Caco-2 (cell line): ENCODE measurements at regions of chr10 and their contacts with region 1.

Region 1: DNA sequence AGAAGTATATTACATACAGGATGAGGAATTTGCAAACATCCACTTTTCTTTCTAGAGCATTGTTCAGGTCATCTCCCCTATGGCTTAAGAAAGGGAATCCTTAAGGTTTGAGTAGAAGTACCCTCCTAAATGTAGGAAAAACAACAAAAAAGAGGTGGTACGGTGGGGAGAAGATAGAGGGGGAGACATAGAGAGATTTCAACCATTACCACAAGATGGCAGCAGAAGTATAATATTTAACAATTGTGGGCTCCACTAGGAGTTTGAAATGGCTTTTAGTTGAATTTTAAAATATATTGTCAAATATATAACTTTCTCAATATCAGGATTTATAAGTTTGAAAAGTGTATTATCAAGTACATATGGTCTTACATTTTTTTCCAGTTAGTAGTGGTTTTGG is 72.7 kb upstream of the PRKG1 start:
- DNase-seq: peak in 1 of 2 experiments; percentile 37
- H3K4me3 ChIP-seq: no peak overlapping the region
- H3K4me3 Mint-ChIP-seq: no peak overlapping the region
- H3K27ac Mint-ChIP-seq: no peak overlapping the region
- H3K4me1 ChIP-seq: no peaks in the 10 kb centered on the region
- H3K4me1 Mint-ChIP-seq: no peaks in the 10 kb centered on the region
- H3K27me3 ChIP-seq: no peaks in the 10 kb centered on the region
- H3K27me3 Mint-ChIP-seq: peaks cover 17% of the 10 kb centered on the region
- CTCF ChIP-seq: peak; percentile 79 to 80

Region 2: DNA sequence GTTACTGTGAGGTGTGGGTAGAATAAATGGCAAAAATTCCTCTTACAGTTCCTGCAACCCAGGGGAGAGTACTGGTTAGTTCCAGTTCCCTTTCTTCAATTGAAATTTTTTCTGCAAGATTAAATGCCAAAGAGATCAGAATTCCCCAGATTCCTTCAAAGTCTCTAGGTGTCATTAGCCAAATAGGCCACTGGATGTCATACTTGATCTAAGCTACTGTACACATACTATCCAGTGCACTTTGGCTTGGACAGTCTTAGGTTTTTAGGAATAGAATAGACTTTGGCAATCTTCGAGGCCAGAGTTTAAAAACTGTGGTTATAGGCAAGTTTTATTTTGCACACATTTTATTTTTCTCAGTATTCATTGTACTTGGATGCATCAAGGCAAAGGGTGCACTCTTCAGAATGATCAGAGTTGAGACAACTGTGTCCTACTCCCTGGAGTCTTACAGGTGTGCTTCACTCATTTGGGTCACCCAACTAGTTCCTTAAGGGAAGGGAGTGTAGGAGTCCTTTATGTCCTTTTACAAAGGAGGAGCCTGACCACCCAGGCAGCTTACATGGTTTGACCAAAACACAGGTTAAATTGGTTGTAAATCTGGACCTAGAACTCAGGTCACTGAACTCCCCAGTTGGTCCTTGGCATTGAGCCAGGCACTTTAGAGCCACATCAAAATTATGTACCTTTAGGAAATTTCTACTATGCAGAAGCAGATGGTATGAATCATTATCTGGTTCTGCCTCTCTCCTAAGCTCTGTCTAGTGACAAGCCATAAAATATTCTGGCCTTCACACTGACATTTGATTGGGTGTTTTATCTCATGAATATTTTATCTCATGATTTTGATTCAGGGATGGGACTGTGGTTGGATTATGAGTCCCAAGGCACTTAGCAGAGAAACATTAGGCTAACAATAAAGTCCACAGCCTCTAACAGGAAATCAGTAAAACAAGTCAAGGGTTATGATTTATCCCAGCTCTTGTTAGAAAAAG is 212.3 kb before region 1 on chr10:
- CTCF ChIA-PET with region 1: no interaction called
- POLR2A ChIA-PET with region 1: no interaction called
- intact Hi-C with region 1: loop called (anchors 1 kb)
- DNase-seq: peak in 1 of 2 experiments; percentile 68
- H3K4me3 ChIP-seq: no peak overlapping the region
- H3K4me3 Mint-ChIP-seq: no peak overlapping the region
- H3K27ac Mint-ChIP-seq: no peak overlapping the region
- H3K4me1 ChIP-seq: peaks cover 4% of the 10 kb centered on the region; the same call in 1 of the 2 replicates
- H3K4me1 Mint-ChIP-seq: peaks cover 10% of the 10 kb centered on the region
- H3K27me3 ChIP-seq: no peaks in the 10 kb centered on the region
- H3K27me3 Mint-ChIP-seq: peaks cover 6% of the 10 kb centered on the region
- CTCF ChIP-seq: peak; percentile 89 to 91

Region 3: GRCh38 chr10:50908366-50908765 is 93.2 kb before region 1 on chr10:
- CTCF ChIA-PET with region 1: no interaction called
- POLR2A ChIA-PET with region 1: no interaction called
- intact Hi-C with region 1: no loop called
- DNase-seq: no peak
- H3K4me3 ChIP-seq: no peak overlapping the region
- H3K4me3 Mint-ChIP-seq: no peak overlapping the region
- H3K27ac Mint-ChIP-seq: no peak overlapping the region
- H3K4me1 ChIP-seq: no peaks in the 10 kb centered on the region
- H3K4me1 Mint-ChIP-seq: no peaks in the 10 kb centered on the region
- H3K27me3 ChIP-seq: no peaks in the 10 kb centered on the region
- H3K27me3 Mint-ChIP-seq: no peaks in the 10 kb centered on the region
- CTCF ChIP-seq: no peak

Region 4: DNA sequence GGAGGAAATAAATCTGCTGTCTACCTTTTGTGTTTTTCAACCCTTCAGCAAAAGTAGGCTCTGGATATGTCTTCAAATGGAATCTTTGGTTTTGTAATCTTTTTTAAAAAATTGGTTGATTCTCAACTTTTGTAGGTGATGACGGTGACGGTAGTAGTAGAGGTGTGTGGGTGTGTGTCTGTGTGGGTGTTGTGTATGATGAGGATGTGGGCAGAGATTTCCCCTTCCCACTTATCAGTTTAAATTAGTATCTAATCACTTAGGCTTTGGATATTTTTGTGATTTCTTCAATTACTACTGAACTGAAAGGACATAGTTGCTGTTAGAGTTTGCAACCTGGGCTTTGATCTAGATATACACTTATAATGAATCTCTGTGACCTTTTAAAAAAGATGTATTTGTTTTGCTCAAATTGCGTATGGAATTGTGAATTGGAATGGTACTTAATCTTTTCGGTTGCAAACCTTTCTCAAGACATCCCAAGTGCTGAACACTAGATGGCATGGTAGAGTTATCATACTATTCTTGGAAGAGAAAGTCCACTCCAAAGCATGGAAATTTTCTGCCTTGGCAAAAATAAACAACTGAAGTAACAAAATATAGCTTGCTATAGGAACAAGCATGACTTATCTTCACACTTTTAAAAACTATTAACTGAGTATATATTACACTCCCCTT is 64.2 kb before region 1 on chr10:
- CTCF ChIA-PET with region 1: no interaction called
- POLR2A ChIA-PET with region 1: no interaction called
- intact Hi-C with region 1: loop called (anchors 2 kb)
- DNase-seq: peak in 1 of 2 experiments; percentile 54
- H3K4me3 ChIP-seq: no peak overlapping the region
- H3K4me3 Mint-ChIP-seq: no peak overlapping the region
- H3K27ac Mint-ChIP-seq: no peak overlapping the region
- H3K4me1 ChIP-seq: no peaks in the 10 kb centered on the region
- H3K4me1 Mint-ChIP-seq: no peaks in the 10 kb centered on the region
- H3K27me3 ChIP-seq: no peaks in the 10 kb centered on the region
- H3K27me3 Mint-ChIP-seq: peaks cover 32% of the 10 kb centered on the region
- CTCF ChIP-seq: peak; percentile 51 to 91

Region 5: DNA sequence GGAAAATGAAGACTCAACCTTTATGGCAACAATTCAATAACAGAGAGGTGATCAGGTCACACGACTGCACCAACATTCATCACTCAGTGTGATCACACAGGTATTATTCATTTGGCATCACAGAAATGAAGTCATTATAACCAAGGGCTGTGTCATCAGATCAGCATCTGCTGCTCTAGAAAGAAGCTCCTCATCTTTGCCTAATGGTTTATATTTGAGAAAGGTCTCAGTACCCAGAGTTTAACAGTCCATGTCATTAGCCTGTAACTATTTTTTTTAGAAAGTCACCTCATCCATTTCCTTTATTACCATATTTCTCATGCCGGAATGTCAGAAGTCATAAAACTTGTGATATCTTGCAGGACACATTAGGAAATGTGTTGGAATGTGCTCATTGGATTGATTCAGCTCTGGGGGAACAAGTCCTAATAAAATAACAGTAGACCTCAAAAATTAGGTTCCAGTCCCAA is 27.6 kb after region 1 on chr10:
- CTCF ChIA-PET with region 1: no interaction called
- POLR2A ChIA-PET with region 1: no interaction called
- intact Hi-C with region 1: no loop called
- DNase-seq: no peak
- H3K4me3 ChIP-seq: no peak overlapping the region
- H3K4me3 Mint-ChIP-seq: no peak overlapping the region
- H3K27ac Mint-ChIP-seq: no peak overlapping the region
- H3K4me1 ChIP-seq: no peaks in the 10 kb centered on the region
- H3K4me1 Mint-ChIP-seq: no peaks in the 10 kb centered on the region
- H3K27me3 ChIP-seq: no peaks in the 10 kb centered on the region
- H3K27me3 Mint-ChIP-seq: peaks cover 2% of the 10 kb centered on the region
- CTCF ChIP-seq: no peak

Region 6: GRCh38 chr10:51047857-51048256 is 46.3 kb after region 1 on chr10:
- CTCF ChIA-PET with region 1: no interaction called
- POLR2A ChIA-PET with region 1: no interaction called
- intact Hi-C with region 1: loop called (anchors 2 kb)
- DNase-seq: no peak
- H3K4me3 ChIP-seq: no peak overlapping the region
- H3K4me3 Mint-ChIP-seq: no peak overlapping the region
- H3K27ac Mint-ChIP-seq: no peak overlapping the region
- H3K4me1 ChIP-seq: no peaks in the 10 kb centered on the region
- H3K4me1 Mint-ChIP-seq: no peaks in the 10 kb centered on the region
- H3K27me3 ChIP-seq: no peaks in the 10 kb centered on the region
- H3K27me3 Mint-ChIP-seq: peaks cover 9% of the 10 kb centered on the region
- CTCF ChIP-seq: peak in 1 of 2 experiments; percentile 22

Region 7: DNA sequence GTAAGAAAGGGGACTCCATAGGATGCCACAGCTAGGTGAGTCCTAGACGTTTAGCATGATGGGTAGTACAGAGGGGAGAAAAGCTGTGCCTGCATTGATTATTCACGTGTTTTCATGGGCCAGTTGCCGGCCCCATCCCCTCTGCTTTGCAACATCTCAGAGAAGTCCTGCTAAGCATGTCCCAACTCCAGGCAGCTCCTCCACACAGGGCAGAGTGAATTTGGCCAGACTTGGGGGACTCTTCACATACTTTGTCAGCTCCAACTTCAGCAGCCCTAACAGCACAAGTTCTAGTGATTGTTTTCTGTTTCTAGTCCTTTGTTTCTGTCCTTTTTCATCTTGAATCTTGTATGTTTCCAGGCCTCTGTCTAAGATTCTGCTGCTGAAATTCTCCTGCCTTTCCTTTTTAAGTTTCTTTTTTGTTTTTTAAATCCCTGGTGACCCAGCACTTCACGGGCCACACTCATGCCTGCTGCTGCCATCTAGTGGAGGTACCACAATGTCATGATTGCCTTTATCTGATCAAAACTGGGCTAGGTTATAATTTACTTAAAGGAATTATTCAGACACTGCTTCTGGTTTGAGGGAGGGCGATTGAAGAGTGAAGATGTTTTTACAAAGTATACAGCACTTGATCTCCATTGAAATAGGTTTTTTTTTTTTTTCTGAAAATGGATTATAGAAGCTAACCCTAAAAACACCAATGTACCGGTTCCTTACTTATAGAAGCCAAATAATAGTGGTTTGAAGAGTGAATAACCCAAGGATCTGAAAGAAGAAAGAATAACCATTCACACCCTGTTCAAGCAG is 420.9 kb after region 1 on chr10:
- CTCF ChIA-PET with region 1: no interaction called
- POLR2A ChIA-PET with region 1: no interaction called
- intact Hi-C with region 1: loop called (anchors 2 kb)
- DNase-seq: peak in 1 of 2 experiments; percentile 59
- H3K4me3 ChIP-seq: no peak overlapping the region
- H3K4me3 Mint-ChIP-seq: no peak overlapping the region
- H3K27ac Mint-ChIP-seq: no peak overlapping the region
- H3K4me1 ChIP-seq: no peaks in the 10 kb centered on the region
- H3K4me1 Mint-ChIP-seq: no peaks in the 10 kb centered on the region
- H3K27me3 ChIP-seq: no peaks in the 10 kb centered on the region
- H3K27me3 Mint-ChIP-seq: peaks cover 10% of the 10 kb centered on the region
- CTCF ChIP-seq: peak; percentile 75 to 88

Region 8: GRCh38 chr10:51960494-51960895 is 958.9 kb after region 1 on chr10:
- CTCF ChIA-PET with region 1: no interaction called
- POLR2A ChIA-PET with region 1: no interaction called
- intact Hi-C with region 1: loop called (anchors 5 kb)
- DNase-seq: peak in 1 of 2 experiments; percentile 59
- H3K4me3 ChIP-seq: no peak overlapping the region
- H3K4me3 Mint-ChIP-seq: no peak overlapping the region
- H3K27ac Mint-ChIP-seq: no peak overlapping the region
- H3K4me1 ChIP-seq: no peaks in the 10 kb centered on the region
- H3K4me1 Mint-ChIP-seq: no peaks in the 10 kb centered on the region
- H3K27me3 ChIP-seq: no peaks in the 10 kb centered on the region
- H3K27me3 Mint-ChIP-seq: peaks cover 31% of the 10 kb centered on the region
- CTCF ChIP-seq: peak; percentile 73 to 78